ENCODE measurements at regions of chr11 and their contacts with region 1.

Region 1: GRCh38 chr11:27201454-27202236 is 161.0 kb downstream of the BBOX1 start:
- DNase-seq: peak; percentile 98
- H3K4me3 ChIP-seq: no peak overlapping the region
- H3K27ac ChIP-seq: peak overlapping the region in 3 of 4 donors; percentile 73 to 81 (median 78)
- H3K4me1 ChIP-seq: peaks cover 0 to 67% (median 46%) of the 10 kb centered on the region in 4 donors
- H3K27me3 ChIP-seq: no peaks in the 10 kb centered on the region
- CTCF ChIP-seq: no peak
- EP300 ChIP-seq: peak in 2 of 4 donors; percentile 45 to 57
- POLR2A ChIP-seq: no peak

Region 2: GRCh38 chr11:27239305-27239942 is 37.8 kb after region 1 on chr11:
- intact Hi-C with region 1: loop called (anchors 5 kb)
- DNase-seq: no peak
- H3K4me3 ChIP-seq: no peak overlapping the region
- H3K27ac ChIP-seq: no peak overlapping the region
- H3K4me1 ChIP-seq: peaks cover 0 to 58% (median 30%) of the 10 kb centered on the region in 4 donors
- H3K27me3 ChIP-seq: no peaks in the 10 kb centered on the region
- CTCF ChIP-seq: no peak
- EP300 ChIP-seq: no peak
- POLR2A ChIP-seq: no peak

Region 3: DNA sequence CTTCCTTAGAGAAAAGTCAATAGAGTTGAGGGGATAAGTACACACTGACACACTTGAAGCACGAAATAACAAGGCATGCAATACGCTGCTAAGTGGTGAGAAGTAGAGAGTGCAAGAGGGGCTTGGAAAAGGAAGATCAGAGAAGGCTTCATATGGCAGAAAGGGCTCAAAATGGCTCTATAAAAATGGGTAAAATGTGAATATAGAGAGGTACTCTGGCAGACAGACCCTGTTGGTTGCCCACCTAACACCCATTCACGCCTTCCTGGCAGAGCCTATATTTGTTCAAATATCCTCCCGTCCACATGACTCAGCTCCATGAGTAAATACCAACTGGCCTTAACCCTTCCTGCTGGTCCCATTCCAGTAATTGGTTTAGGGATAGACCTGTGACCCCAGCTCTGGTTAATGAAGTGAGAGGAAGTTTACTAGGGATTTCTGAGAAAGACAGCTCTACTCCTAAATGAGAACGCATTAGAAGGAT is 200.2 kb after region 1 on chr11:
- intact Hi-C with region 1: no loop called
- DNase-seq: no peak
- H3K4me3 ChIP-seq: no peak overlapping the region
- H3K27ac ChIP-seq: no peak overlapping the region
- H3K4me1 ChIP-seq: peaks cover 0 to 12% (median 0%) of the 10 kb centered on the region in 4 donors
- H3K27me3 ChIP-seq: no peaks in the 10 kb centered on the region
- CTCF ChIP-seq: no peak
- EP300 ChIP-seq: no peak
- POLR2A ChIP-seq: no peak